ENCODE measurements at regions of chr16 and their contacts with region 1.

Region 1: GRCh38 chr16:56931892-56932720 is at the start of gene HERPUD1:
- DNase-seq: peak; percentile 70
- ATAC-seq: peak; percentile 99
- H3K4me3 ChIP-seq: peak within 1 kb of the TSS; percentile 91 to 95
- H3K27ac ChIP-seq: peak within 1 kb of the TSS; percentile 95
- H3K4me1 ChIP-seq: peaks cover 4% of the 10 kb centered on the region
- H3K27me3 ChIP-seq: no peaks in the 10 kb centered on the region
- CTCF ChIP-seq: no peak
- total RNA-seq, gene HERPUD1: 45.2 TPM

Region 2: DNA sequence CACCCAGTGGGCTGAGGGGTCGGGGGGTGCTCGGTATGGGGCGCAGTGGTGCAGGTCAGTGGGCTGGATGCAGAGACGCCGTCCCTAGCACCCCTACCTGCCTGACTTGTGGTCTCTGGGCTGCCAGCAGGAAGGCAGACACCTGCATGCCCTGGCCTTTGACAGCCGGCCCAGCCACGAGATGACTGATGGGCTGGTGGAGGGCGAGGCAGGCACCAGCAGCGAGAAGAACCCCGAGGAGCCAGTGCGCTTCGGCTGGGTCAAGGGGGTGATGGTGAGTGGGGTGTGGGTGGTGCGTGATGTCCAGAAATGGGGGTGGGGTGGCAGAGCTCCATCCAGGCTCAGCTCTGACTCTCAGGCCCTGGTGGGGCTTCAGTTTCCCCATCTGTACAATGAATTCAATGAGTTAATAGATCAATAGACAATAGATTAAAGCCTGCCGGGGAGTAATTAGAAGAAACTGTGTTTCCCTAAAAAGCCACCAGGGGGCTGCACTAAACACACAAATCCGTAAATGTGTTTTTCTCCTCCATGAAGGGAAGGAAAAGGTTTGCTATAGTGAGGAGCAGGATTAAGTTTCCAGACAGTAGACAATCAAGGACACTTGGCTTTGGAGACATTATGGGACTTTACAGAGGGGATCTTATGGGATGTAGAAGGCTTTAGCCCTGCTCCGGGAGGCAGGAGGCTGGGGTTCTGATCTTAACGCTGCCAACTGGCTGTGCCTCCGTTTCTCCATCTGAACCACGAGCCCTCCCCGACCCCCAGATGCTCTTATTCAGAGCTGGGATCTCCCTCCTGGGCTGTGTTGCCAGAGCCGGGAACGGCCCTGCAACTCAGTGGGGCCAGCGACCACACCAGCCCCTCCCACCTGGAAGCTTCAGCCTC is 64.9 kb before region 1 on chr16:
- CTCF ChIA-PET with region 1: no interaction called
- POLR2A ChIA-PET with region 1: no interaction called
- in situ Hi-C with region 1: no loop called
- intact Hi-C with region 1: loop called (anchors 10 kb)
- DNase-seq: no peak
- ATAC-seq: 0 out of 2 replicates have a peak, but pooled peaks have one; percentile 19
- H3K4me3 ChIP-seq: no peak overlapping the region
- H3K27ac ChIP-seq: peak overlapping the region; percentile 17; the same call in 1 of the 2 replicates
- H3K4me1 ChIP-seq: no peaks in the 10 kb centered on the region
- H3K27me3 ChIP-seq: no peaks in the 10 kb centered on the region
- CTCF ChIP-seq: peak; percentile 79

Measured in Panc1 (cell line).